GM12878 (cell line): ENCODE measurements at regions of chr15 and their contacts with region 1.

Region 1: GRCh38 chr15:86247249-86247955 is 167.7 kb downstream of the AGBL1 start:
- DNase-seq: no peak
- ATAC-seq: no peak
- H3K4me3 ChIP-seq: no peak overlapping the region
- H3K27ac ChIP-seq: no peak overlapping the region
- H3K4me1 ChIP-seq: no peaks in the 10 kb centered on the region
- H3K27me3 ChIP-seq: no peaks in the 10 kb centered on the region
- CTCF ChIP-seq: no peak
- EP300 ChIP-seq: no peak
- POLR2A ChIP-seq: no peak
- RAD21 ChIP-seq: no peak

Region 2: GRCh38 chr15:86489981-86490380 is 242.6 kb after region 1 on chr15:
- CTCF ChIA-PET with region 1: no interaction called
- POLR2A ChIA-PET with region 1: no interaction called
- RAD21 ChIA-PET with region 1: no interaction called
- SMC1A ChIA-PET with region 1: no interaction called
- in situ Hi-C with region 1: no loop called
- intact Hi-C with region 1: loop called (anchors 10 kb)
- DNase-seq: no peak
- ATAC-seq: no peak
- H3K4me3 ChIP-seq: no peak overlapping the region
- H3K27ac ChIP-seq: no peak overlapping the region
- H3K4me1 ChIP-seq: no peaks in the 10 kb centered on the region
- H3K27me3 ChIP-seq: no peaks in the 10 kb centered on the region
- CTCF ChIP-seq: no peak
- EP300 ChIP-seq: no peak
- POLR2A ChIP-seq: no peak
- RAD21 ChIP-seq: no peak